ENCODE measurements at regions of chr20 and their contacts with region 1.

Region 1: GRCh38 chr20:58022711-58023110 is 205.7 kb downstream of the ANKRD60 start:
- DNase-seq: peak in 1 of 2 experiments; percentile 27
- H3K4me3 ChIP-seq: no peak overlapping the region
- H3K4me3 Mint-ChIP-seq: no peak overlapping the region
- H3K27ac Mint-ChIP-seq: no peak overlapping the region
- H3K4me1 ChIP-seq: no peaks in the 10 kb centered on the region
- H3K4me1 Mint-ChIP-seq: no peaks in the 10 kb centered on the region
- H3K27me3 ChIP-seq: peaks cover 2% of the 10 kb centered on the region
- H3K27me3 Mint-ChIP-seq: peaks cover 12% of the 10 kb centered on the region
- CTCF ChIP-seq: no peak

Region 2: GRCh38 chr20:58039274-58040092 is 16.8 kb after region 1 on chr20:
- CTCF ChIA-PET with region 1: no interaction called
- POLR2A ChIA-PET with region 1: no interaction called
- intact Hi-C with region 1: loop called (anchors 1 kb)
- DNase-seq: no peak
- H3K4me3 ChIP-seq: no peak overlapping the region
- H3K4me3 Mint-ChIP-seq: no peak overlapping the region
- H3K27ac Mint-ChIP-seq: no peak overlapping the region
- H3K4me1 ChIP-seq: no peaks in the 10 kb centered on the region
- H3K4me1 Mint-ChIP-seq: no peaks in the 10 kb centered on the region
- H3K27me3 ChIP-seq: peaks cover 1% of the 10 kb centered on the region; the same call in 1 of the 2 replicates
- H3K27me3 Mint-ChIP-seq: peaks cover 27% of the 10 kb centered on the region
- CTCF ChIP-seq: no peak